ENCODE measurements at regions of chr7 and their contacts with region 1.

Region 1: DNA sequence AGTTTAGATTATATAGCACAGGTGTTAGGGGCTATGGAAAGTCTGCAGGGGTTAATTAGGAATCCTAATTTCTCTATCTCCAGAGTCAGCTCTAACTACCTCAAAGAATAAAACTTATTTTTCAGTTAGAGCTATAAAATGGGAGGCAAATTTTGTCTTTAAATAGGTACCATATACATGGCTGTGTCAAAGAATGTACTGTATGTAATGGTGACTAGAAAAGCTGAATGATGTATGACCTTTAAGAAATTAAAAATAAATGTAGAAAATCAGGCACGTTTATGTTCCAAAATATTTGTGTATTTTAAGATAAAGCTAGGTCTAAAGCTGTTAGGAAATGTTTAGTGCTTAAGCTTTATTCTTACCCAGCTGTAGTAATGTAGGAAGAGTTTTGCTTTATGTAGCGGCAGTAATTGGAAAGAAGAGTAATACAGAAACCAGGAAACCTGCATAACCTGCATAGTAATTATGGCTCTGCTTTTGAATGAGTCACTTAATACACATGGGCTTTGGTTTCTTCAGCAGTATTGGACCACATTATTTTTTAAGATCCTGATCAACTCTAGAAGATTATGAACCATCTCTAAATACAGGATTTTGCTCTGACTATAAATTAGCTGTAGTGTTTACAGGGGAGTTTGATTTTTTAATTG is 85.0 kb downstream of the KMT2E start:
- DNase-seq: no peak
- H3K4me3 ChIP-seq: no peak overlapping the region
- H3K27ac ChIP-seq: no peak overlapping the region
- H3K27me3 ChIP-seq: no peaks in the 10 kb centered on the region
- CTCF ChIP-seq: no peak

Region 2: GRCh38 chr7:104983578-104984539 is 115.1 kb before region 1 on chr7:
- in situ Hi-C with region 1: loop called (anchors 25 kb)
- DNase-seq: peak; percentile 74
- H3K4me3 ChIP-seq: peak overlapping the region; percentile 64
- H3K27ac ChIP-seq: peak overlapping the region; percentile 97
- H3K27me3 ChIP-seq: no peaks in the 10 kb centered on the region
- CTCF ChIP-seq: peak; percentile 73

Measured in brain microvascular endothelial cell (primary cell).